ENCODE measurements at regions of chr5 and their contacts with region 1.

Region 1: DNA sequence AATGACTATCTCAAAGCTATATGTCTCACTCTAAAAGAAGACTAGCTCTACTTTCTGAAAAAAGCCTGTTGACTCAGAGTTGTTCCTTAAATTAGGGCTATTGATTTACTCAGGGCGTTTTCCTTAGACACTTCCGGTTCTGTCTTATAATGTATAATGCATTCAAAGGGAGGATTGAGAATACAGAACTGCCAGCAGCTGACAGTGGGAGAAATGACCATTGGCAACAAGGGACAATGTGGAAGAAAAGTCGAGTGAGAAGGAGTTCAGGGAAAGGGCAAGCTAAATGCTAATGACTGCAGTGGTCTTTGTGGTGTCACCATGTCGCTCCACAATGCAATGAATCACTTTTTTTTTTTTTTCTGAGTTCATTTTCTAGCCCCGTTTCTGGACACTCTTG is 65.7 kb upstream of the ANKH start:
- DNase-seq: no peak
- H3K4me3 Mint-ChIP-seq: no peak overlapping the region
- H3K27ac Mint-ChIP-seq: no peak overlapping the region
- H3K4me1 Mint-ChIP-seq: peaks cover 18% of the 10 kb centered on the region
- H3K27me3 Mint-ChIP-seq: peaks cover 2% of the 10 kb centered on the region

Region 2: DNA sequence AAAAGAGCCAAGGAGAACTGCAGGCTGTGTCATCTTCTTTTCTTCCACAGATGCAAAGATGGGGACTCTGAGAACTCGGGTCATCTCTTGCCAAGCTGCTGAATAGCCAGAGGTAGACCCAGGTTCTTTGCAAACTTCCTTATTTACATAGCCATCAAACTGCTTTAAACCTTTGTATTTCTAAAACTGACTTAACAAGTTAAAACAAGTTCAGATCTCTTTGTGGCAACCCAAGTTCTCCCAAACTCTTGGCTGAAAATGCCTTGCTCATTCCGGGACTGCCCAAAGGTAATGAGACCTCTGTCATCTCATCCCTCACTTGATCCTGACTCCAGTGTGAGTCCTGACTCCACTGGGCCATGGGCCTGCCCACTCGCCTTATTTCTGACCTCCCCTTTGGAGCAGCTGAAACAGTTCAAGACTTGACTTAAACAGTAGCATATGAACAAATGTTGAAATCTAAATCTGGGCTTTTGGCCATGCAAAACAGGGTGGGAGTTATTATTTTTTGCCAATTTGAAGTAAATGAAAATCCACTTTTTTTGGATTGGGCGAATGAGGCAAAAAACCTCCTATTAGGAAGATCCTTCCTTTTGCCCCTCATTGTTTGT is 613.4 kb after region 1 on chr5:
- CTCF ChIA-PET with region 1: no interaction called
- POLR2A ChIA-PET with region 1: no interaction called
- intact Hi-C with region 1: loop called (anchors 10 kb)
- DNase-seq: no peak
- H3K4me3 Mint-ChIP-seq: no peak overlapping the region
- H3K27ac Mint-ChIP-seq: no peak overlapping the region
- H3K4me1 Mint-ChIP-seq: no peaks in the 10 kb centered on the region
- H3K27me3 Mint-ChIP-seq: no peaks in the 10 kb centered on the region